ENCODE measurements at regions of chr2 and their contacts with region 1.

Region 1: DNA sequence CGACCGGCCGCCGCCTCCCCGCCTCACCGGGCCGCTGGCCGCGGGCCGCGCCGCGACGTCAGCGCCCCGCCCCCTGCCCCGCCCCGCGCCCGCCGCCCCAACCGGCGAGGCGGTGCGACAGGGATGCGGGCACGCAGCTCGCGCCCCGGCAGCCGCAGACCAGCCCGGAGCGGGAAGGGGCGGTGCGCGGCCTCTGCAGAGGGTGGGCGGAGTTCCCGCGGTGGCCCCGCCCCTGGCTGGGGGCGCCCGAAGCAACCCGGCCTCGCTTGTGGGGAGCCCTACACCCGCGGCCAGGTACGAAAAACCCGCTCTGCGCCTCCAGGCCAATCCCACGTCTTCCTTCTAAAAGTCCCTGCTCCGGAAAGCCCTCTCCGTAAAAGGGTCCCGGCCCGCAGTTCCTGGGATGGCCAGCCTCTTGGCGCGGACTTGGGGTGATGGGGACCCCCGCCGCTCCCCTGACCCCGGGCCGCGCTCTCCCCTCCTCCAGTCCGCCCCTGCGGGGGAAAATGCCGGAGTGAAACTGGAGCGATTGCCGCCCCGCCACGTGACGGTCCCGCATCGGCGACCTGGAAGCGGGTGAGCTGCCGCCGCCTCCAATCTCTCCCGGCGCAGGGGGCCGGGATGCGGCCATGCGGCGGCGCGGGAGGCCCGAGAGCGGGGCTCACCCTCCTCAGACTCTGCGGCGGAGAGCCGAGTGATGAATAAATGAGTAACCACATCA is at the start of gene RAB11FIP5:
- DNase-seq: peak; percentile 81 to 91
- H3K4me3 ChIP-seq: peak within 1 kb of the TSS; percentile 92
- H3K4me3 Mint-ChIP-seq: peak within 1 kb of the TSS; percentile 81
- H3K27ac Mint-ChIP-seq: peak within 1 kb of the TSS; percentile 78
- H3K4me1 ChIP-seq: peaks cover 13% of the 10 kb centered on the region
- H3K4me1 Mint-ChIP-seq: peaks cover 15% of the 10 kb centered on the region
- H3K27me3 ChIP-seq: no peaks in the 10 kb centered on the region; the same call in 1 of the 2 replicates
- H3K27me3 Mint-ChIP-seq: no peaks in the 10 kb centered on the region
- CTCF ChIP-seq: no peak
- total RNA-seq, gene RAB11FIP5: 17.3 and 17.4 TPM in 2 replicates

Region 2: DNA sequence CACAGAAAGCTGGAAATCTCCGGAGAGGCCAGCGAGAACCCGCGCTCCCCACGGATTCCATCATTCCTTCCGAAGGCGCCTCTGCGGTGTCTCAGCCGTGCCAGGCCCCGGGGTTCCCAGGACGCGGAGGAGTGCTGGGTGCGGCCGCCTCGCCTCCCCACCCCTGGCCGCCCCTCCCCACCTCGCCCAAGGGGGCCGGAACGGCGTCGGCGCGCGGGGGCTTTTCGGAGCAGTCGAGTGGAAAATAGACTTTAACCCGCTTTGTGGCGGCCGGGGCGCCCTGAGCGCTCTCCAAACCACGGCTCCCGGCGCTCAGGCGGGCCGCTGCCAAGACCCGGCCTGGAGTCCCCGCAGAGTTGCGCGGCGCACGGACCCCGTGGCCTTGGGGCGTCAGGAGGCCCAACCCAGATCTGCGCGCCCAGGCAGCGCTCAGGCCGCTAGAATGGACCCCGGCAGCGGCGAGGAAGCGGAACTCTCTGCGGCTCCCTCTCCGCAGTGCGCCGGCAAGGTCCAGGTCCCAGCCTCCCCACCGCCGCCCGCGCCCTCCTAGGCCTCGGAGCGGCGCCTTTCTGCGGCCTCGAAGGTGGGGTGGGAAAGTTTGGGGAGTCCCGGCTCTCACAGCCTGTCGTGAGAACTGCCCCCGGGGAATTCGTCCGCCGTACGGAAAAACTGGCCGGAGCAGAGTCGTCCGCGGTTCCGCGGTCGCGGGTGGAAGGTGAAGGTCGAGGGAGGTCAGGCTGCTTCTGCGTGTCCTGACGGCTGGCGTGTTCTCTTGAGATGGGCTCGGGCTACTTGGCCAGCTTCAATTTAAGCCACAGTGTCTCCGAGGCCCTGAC is 196.9 kb before region 1 on chr2:
- CTCF ChIA-PET with region 1: no interaction called
- POLR2A ChIA-PET with region 1: no interaction called
- intact Hi-C with region 1: loop called (anchors 5 kb)
- DNase-seq: peak; percentile 84 to 87
- H3K4me3 ChIP-seq: peak overlapping the region; percentile 61
- H3K4me3 Mint-ChIP-seq: peak overlapping the region; percentile 83
- H3K27ac Mint-ChIP-seq: no peak overlapping the region
- H3K4me1 ChIP-seq: peaks cover 19% of the 10 kb centered on the region; the same call in 1 of the 2 replicates
- H3K4me1 Mint-ChIP-seq: no peaks in the 10 kb centered on the region
- H3K27me3 ChIP-seq: peaks cover 4% of the 10 kb centered on the region
- H3K27me3 Mint-ChIP-seq: peaks cover 34% of the 10 kb centered on the region
- CTCF ChIP-seq: no peak

Region 3: DNA sequence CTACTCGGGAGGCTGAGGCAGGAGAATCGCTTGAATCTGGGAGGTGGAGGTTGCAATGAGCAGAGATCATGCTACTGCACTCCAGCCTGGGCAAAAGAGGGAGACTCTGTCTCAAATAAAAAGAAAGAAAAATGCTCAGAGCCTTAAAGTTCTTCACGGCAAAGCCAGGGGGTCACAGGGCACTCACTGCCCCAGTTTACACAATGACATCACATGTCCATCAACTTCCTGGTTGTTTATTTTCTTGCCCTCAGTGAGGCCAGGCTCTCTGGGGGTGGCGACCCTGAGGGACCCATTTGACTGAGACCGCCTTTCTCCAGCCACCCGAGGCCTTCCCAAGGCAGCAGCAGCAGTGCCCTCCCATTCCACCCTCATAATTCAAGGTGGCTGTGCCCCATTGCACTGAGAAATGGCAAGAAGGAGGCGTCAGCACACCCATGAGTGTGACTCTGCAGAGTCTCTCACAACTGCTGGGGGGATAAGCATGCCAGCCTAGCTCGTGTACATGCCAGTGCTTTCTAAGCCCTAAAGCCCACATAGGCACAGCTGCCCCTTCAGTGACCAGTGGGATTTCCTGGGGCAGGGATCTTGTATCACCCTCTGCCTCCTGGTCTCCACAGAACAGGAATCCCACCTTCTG is 91.6 kb before region 1 on chr2:
- CTCF ChIA-PET with region 1: no interaction called
- POLR2A ChIA-PET with region 1: no interaction called
- intact Hi-C with region 1: no loop called
- DNase-seq: no peak
- H3K4me3 ChIP-seq: no peak overlapping the region
- H3K4me3 Mint-ChIP-seq: no peak overlapping the region
- H3K27ac Mint-ChIP-seq: peak overlapping the region; percentile 66
- H3K4me1 ChIP-seq: peaks cover 16% of the 10 kb centered on the region
- H3K4me1 Mint-ChIP-seq: no peaks in the 10 kb centered on the region
- H3K27me3 ChIP-seq: no peaks in the 10 kb centered on the region
- H3K27me3 Mint-ChIP-seq: no peaks in the 10 kb centered on the region
- CTCF ChIP-seq: no peak

Region 4: DNA sequence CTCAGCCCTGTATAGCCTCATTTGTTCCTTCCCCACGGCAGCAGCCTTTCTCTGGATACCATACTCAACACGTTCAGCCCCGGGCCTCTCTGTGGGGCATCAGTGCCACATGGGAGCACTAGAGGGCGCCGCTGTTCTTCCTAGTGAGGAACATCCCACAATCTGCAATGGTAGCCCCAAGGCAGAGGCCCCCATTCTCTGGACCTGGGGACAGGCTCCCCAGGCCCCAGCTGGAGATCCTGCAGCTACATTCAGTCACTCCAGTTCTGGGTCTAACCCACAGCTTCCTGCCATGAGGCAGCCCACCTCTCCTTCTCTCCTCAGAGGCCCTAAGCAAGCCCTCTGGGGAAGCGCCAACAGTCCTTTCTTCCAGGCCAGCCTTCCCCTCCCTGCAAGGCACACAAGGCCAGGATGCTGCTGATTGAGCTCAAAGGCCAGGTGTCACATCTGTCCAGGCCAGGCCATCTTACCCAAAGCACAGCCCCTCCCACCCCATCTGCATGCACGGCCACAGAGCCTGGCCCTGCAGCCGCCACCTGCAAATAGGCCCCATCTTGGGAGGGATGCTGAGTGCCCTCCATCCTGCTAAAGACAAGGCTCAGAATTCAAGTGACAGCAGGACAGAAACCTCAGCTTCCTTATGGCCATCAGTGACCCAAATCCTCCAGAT is 27.2 kb before region 1 on chr2:
- CTCF ChIA-PET with region 1: interaction called, 14 read pairs
- POLR2A ChIA-PET with region 1: no interaction called
- intact Hi-C with region 1: loop called (anchors 2 kb)
- DNase-seq: peak; percentile 87 to 89
- H3K4me3 ChIP-seq: no peak overlapping the region
- H3K4me3 Mint-ChIP-seq: no peak overlapping the region
- H3K27ac Mint-ChIP-seq: no peak overlapping the region
- H3K4me1 ChIP-seq: peaks cover 27% of the 10 kb centered on the region
- H3K4me1 Mint-ChIP-seq: peaks cover 24% of the 10 kb centered on the region
- H3K27me3 ChIP-seq: no peaks in the 10 kb centered on the region
- H3K27me3 Mint-ChIP-seq: no peaks in the 10 kb centered on the region
- CTCF ChIP-seq: peak; percentile 93 to 95